ENCODE measurements at regions of chr10 and their contacts with region 1.

Region 1: GRCh38 chr10:43361986-43362839 is 9.2 kb upstream of the FXYD4 start:
- DNase-seq: peak; percentile 96 to 98 (median 98)
- H3K4me3 ChIP-seq: peak overlapping the region; percentile 82 to 97
- H3K4me3 Mint-ChIP-seq: peak overlapping the region; percentile 95 to 100 (median 98)
- H3K27ac ChIP-seq: peak overlapping the region; percentile 92
- H3K27ac Mint-ChIP-seq: peak overlapping the region; percentile 97 to 99 (median 98)
- H3K4me1 ChIP-seq: peaks cover 19% of the 10 kb centered on the region
- H3K4me1 Mint-ChIP-seq: peaks cover 21 to 34% (median 27%) of the 10 kb centered on the region in 4 donors
- H3K27me3 ChIP-seq: no peaks in the 10 kb centered on the region
- H3K27me3 Mint-ChIP-seq: no peaks in the 10 kb centered on the region

Region 2: GRCh38 chr10:43204943-43205671 is 157.1 kb before region 1 on chr10:
- CTCF ChIA-PET with region 1: interaction called, 3 read pairs
- POLR2A ChIA-PET with region 1: interaction called, 3 read pairs
- intact Hi-C with region 1: loop called (anchors 5 kb)
- DNase-seq: peak in 4 of 5 donors; percentile 29 to 52 (median 47)
- H3K4me3 ChIP-seq: no peak overlapping the region
- H3K4me3 Mint-ChIP-seq: no peak overlapping the region
- H3K27ac ChIP-seq: no peak overlapping the region
- H3K27ac Mint-ChIP-seq: peak overlapping the region in 2 of 7 donors; percentile 53 to 66
- H3K4me1 ChIP-seq: peaks cover 8% of the 10 kb centered on the region
- H3K4me1 Mint-ChIP-seq: peaks cover 0 to 10% (median 2%) of the 10 kb centered on the region in 4 donors
- H3K27me3 ChIP-seq: no peaks in the 10 kb centered on the region
- H3K27me3 Mint-ChIP-seq: no peaks in the 10 kb centered on the region

Region 3: GRCh38 chr10:43396928-43397624 is 34.9 kb after region 1 on chr10:
- CTCF ChIA-PET with region 1: interaction called, 3 read pairs
- POLR2A ChIA-PET with region 1: interaction called, 28 read pairs
- intact Hi-C with region 1: loop called (anchors 1 kb)
- DNase-seq: peak; percentile 67 to 82 (median 75)
- H3K4me3 ChIP-seq: peak overlapping the region; percentile 10 to 67
- H3K4me3 Mint-ChIP-seq: peak overlapping the region; percentile 79 to 100 (median 96)
- H3K27ac ChIP-seq: peak overlapping the region; percentile 100
- H3K27ac Mint-ChIP-seq: peak overlapping the region; percentile 93 to 99 (median 98)
- H3K4me1 ChIP-seq: peaks cover 81% of the 10 kb centered on the region
- H3K4me1 Mint-ChIP-seq: peaks cover 62 to 95% (median 73%) of the 10 kb centered on the region in 4 donors
- H3K27me3 ChIP-seq: no peaks in the 10 kb centered on the region
- H3K27me3 Mint-ChIP-seq: no peaks in the 10 kb centered on the region

Region 4: GRCh38 chr10:43420369-43421200 is 58.4 kb after region 1 on chr10:
- CTCF ChIA-PET with region 1: no interaction called
- POLR2A ChIA-PET with region 1: interaction called, 14 read pairs
- intact Hi-C with region 1: no loop called
- DNase-seq: peak; percentile 82 to 90 (median 86)
- H3K4me3 ChIP-seq: peak overlapping the region; percentile 82 to 88
- H3K4me3 Mint-ChIP-seq: peak overlapping the region; percentile 85 to 93 (median 90)
- H3K27ac ChIP-seq: peak overlapping the region; percentile 82
- H3K27ac Mint-ChIP-seq: peak overlapping the region; percentile 89 to 98 (median 97)
- H3K4me1 ChIP-seq: peaks cover 36% of the 10 kb centered on the region
- H3K4me1 Mint-ChIP-seq: peaks cover 17 to 48% (median 31%) of the 10 kb centered on the region in 4 donors
- H3K27me3 ChIP-seq: no peaks in the 10 kb centered on the region
- H3K27me3 Mint-ChIP-seq: no peaks in the 10 kb centered on the region

Region 5: GRCh38 chr10:43574001-43574892 is 212.0 kb after region 1 on chr10 and contains the start of gene ZNF239:
- CTCF ChIA-PET with region 1: no interaction called
- POLR2A ChIA-PET with region 1: interaction called, 3 read pairs
- intact Hi-C with region 1: loop called (anchors 10 kb)
- DNase-seq: peak; percentile 80 to 83 (median 83)
- H3K4me3 ChIP-seq: peak within 1 kb of the TSS; percentile 15 to 54
- H3K4me3 Mint-ChIP-seq: peak within 1 kb of the TSS; percentile 80 to 90 (median 88)
- H3K27ac ChIP-seq: peak within 1 kb of the TSS; percentile 58
- H3K27ac Mint-ChIP-seq: peak within 1 kb of the TSS; percentile 88 to 98 (median 95)
- H3K4me1 ChIP-seq: peaks cover 48% of the 10 kb centered on the region
- H3K4me1 Mint-ChIP-seq: peaks cover 38 to 65% (median 49%) of the 10 kb centered on the region in 4 donors
- H3K27me3 ChIP-seq: no peaks in the 10 kb centered on the region
- H3K27me3 Mint-ChIP-seq: no peaks in the 10 kb centered on the region
- total RNA-seq, gene ZNF239: 5.8 to 6.2 TPM